Activated CD8-positive, alpha-beta memory T cell treated with anti-CD3 and anti-CD28 coated beads, Interleukin-2, amount 10 ng/mL, durations not matched to agents 7 days and 5 days (primary cell): ENCODE measurements at regions of chr5 and their contacts with region 1.

Region 1: DNA sequence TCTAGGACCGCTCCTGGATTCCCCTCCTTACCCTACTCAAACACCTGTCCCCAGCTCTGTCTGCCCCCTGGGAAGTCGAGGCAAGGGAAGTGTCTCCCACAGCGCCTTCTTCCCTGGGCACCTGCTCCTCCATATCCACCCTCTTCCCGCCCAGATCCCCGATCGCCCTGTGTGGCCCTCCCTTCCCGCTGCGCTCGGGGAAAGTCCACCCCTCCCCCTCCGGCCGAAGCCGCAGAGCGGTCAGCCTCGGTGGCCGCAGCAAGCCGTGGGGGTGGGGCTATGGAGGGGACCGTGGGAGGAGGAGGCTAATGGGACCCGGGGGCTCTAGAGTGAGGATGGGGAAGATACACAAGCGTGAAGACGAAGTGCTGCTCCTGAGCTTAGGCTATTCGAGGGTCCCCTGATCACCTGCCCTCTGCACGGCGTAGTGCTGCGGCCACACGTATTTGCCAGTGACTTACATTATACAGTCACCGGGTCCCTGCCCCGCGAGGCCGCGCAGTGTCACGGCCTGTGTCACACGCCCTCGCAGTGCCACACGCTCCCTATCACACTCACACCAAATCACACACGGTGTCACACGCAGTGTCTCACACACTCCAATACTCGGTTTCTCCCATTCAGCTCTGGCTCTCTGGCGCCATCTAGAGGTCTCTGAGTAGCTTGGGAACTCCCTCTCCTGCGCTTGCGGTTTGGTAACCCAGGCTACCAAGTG is 658 bp upstream of the PCDH1 start:
- DNase-seq: peak; percentile 91
- ATAC-seq: peak; percentile 88
- H3K4me3 Mint-ChIP-seq: peak overlapping the region; percentile 38
- H3K27ac Mint-ChIP-seq: peak overlapping the region; percentile 8
- H3K4me1 Mint-ChIP-seq: peaks cover 22% of the 10 kb centered on the region
- H3K27me3 Mint-ChIP-seq: peaks cover 88% of the 10 kb centered on the region

Region 2: DNA sequence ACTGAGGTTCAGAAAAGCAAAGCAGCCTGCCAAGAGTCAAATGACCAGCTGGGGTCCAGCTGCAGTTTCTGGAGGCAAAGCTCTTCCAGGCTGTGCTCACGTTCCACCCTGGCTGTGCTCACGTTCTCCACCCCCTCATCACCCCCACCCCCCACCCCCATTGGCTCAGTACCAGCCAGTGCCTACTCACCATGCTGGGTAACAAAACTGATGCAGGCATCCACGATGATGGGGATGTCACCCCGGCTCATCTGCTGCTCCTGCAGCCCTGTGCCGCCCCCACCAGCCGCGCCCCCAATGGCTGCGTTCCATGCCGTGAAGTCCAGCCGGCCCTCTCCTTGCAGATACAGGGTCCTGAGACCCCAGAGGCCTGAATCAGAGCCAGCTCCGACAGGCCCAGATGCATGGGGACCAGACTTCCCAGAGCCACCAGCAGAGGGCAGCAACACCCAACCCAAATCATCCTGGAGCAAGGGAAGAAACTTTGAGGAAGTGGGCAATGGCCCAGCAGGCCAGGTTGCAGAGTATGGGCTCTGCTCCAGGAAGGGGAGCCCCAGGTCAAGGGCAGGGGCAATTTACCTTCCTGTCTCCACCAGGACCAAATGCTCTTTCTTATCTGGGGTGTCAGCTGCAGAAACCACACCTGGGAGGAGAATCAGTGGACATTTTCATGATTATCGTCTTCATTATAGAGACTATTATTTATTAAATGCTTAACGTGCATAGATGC is 214.0 kb before region 1 on chr5:
- CTCF ChIA-PET with region 1: interaction called, 49 read pairs
- DNase-seq: peak; percentile 81
- ATAC-seq: peak; percentile 93
- H3K4me3 Mint-ChIP-seq: no peak overlapping the region
- H3K27ac Mint-ChIP-seq: no peak overlapping the region
- H3K4me1 Mint-ChIP-seq: peaks cover 2% of the 10 kb centered on the region
- H3K27me3 Mint-ChIP-seq: no peaks in the 10 kb centered on the region

Region 3: GRCh38 chr5:141811287-141812155 is 67.3 kb before region 1 on chr5:
- CTCF ChIA-PET with region 1: interaction called, 54 read pairs
- DNase-seq: peak; percentile 49
- ATAC-seq: peak; percentile 75
- H3K4me3 Mint-ChIP-seq: no peak overlapping the region
- H3K27ac Mint-ChIP-seq: no peak overlapping the region
- H3K4me1 Mint-ChIP-seq: peaks cover 5% of the 10 kb centered on the region
- H3K27me3 Mint-ChIP-seq: peaks cover 64% of the 10 kb centered on the region

Region 4: GRCh38 chr5:141889282-141889871 is 10.5 kb after region 1 on chr5:
- CTCF ChIA-PET with region 1: interaction called, 21 read pairs
- DNase-seq: no peak
- ATAC-seq: no peak
- H3K4me3 Mint-ChIP-seq: no peak overlapping the region
- H3K27ac Mint-ChIP-seq: no peak overlapping the region
- H3K4me1 Mint-ChIP-seq: no peaks in the 10 kb centered on the region
- H3K27me3 Mint-ChIP-seq: peaks cover 43% of the 10 kb centered on the region

Region 5: DNA sequence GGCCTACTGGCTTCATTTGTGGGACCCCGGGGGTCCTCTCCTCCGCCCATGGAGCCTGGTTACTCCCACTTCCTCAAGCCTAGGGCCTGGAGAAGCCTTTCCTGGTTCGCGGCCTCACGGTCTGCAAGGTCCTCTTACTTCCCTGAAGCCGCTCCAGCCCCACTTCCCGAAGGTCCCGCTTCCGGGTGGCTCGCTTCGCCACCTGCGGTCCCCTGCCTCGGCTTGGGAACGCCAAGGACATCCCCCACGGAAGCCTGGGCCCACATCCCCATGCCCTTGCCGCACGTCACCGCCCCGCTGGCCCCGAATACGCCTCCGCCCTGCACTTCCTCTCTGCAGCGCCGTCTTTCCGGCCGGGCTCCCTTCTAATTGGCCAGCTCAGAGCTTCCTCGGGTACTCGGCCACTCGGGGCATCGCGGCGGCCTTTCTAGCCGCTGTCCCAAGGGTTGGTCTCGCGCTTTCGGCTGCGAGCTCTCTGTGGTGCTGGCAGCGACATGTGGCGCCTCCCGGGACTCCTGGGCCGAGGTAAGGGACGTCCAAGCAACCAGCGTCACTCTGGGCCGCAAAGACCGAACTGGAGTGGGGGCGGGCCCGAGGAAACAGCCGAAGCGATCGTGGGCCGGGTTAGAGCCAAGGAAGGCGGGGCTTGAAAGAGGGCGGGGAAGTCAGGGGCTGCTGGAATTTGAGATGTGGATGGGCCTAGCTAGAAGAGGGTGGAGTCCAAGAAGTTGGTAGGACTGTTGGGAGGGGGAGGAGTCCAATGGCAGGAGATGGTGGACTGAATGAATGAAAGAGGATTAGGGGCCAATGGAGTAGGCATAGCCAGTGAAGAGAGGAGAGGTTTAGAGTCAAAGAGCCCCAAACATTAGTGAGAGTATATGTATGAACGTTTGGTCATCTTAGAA is 44.8 kb after region 1 on chr5 and contains the start of gene DELE1:
- CTCF ChIA-PET with region 1: interaction called, 11 read pairs
- DNase-seq: peak; percentile 96
- ATAC-seq: peak; percentile 98
- H3K4me3 Mint-ChIP-seq: peak within 1 kb of the TSS; percentile 85
- H3K27ac Mint-ChIP-seq: peak within 1 kb of the TSS; percentile 91
- H3K4me1 Mint-ChIP-seq: peaks cover 26% of the 10 kb centered on the region
- H3K27me3 Mint-ChIP-seq: no peaks in the 10 kb centered on the region
- total RNA-seq, gene DELE1: 65.4 to 68.7 TPM